ENCODE measurements at regions of chr15 and their contacts with region 1.

Region 1: DNA sequence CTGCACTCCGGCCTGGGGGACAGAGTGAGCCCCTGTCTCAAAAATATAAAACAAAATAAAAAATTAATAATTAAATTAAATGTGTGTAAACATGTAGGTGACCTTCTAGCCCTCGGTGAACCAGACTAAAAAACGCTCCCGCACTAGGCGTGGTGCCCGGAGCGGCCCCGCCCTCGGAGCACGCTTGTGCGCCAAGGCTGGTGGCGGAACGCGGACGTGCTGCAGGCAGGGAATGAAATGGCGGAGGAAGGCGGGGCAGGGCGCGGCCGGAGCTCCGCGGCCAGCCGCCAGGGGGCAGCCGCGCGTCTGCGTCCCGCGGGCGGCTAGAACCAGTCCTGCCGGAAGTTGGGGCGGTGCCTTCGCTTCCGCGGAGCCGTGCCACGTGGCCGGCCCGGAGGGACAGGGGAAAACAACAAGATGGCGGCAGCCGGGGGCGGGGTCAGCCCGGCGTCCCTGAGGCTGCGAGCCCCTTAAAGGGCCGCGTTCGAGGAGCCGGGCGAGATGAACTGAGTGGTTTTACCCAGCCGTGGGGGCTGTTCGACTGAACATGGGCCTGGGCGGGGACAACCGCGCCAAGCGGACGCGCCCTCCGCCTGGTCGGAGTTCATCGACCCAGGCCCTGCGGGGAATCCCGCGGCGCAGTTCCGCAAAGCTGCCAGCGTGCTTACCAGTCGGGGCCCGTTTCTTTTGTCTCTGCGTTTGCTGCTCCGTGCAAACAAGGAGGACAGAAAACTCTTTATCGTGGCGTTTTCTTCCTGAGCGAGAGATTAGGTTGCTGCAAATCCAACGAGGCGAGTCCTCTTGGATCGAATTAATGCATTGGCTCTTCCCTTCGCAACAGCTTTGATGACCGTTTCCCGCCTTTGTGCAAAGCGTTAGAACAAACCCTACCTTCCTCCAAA is 90.9 kb upstream of the CHD2 start:
- DNase-seq: peak; percentile 99

Region 2: DNA sequence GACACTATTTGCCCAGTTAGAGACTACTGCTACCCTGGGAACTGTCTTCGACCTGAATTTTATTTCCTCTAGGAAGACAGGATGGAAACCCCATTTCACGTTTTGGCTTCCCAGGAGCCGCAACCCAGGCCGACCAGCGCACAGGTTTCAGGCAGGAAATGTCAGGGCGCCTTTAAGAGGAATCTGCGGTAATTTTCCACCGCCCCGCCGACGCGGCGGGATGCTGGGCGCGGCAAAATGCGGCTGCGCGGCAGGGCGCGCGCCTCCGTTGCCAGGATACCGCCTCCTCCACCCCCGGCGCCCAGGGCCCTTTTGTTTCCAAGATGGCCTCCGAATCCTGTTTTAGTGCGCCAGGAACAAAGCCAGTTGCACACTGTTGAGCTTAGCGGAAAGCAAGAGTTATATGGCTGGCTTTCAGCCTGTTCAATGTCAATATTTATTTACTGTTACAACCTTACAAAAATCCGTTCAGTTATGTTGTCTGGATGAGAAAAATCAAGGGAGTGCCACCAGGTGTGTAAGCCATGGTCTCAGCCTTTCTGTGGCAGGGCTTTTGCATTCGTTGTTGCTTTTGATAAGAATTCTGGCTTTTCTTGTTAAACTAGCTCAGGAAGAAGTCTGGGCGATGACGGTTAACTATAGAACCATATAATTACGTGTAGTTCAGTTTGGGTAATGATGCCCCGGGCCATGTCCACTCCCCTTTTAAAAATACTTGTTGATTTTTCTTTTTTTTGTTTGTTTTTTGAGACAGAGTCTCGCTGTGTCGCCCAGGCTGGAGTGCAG is 11.2 kb after region 1 on chr15:
- intact Hi-C with region 1: loop called (anchors 1 kb)
- DNase-seq: peak; percentile 96

Region 3: GRCh38 chr15:92831655-92832328 is 22.6 kb after region 1 on chr15:
- intact Hi-C with region 1: loop called (anchors 1 kb)
- DNase-seq: peak; percentile 96

Region 4: DNA sequence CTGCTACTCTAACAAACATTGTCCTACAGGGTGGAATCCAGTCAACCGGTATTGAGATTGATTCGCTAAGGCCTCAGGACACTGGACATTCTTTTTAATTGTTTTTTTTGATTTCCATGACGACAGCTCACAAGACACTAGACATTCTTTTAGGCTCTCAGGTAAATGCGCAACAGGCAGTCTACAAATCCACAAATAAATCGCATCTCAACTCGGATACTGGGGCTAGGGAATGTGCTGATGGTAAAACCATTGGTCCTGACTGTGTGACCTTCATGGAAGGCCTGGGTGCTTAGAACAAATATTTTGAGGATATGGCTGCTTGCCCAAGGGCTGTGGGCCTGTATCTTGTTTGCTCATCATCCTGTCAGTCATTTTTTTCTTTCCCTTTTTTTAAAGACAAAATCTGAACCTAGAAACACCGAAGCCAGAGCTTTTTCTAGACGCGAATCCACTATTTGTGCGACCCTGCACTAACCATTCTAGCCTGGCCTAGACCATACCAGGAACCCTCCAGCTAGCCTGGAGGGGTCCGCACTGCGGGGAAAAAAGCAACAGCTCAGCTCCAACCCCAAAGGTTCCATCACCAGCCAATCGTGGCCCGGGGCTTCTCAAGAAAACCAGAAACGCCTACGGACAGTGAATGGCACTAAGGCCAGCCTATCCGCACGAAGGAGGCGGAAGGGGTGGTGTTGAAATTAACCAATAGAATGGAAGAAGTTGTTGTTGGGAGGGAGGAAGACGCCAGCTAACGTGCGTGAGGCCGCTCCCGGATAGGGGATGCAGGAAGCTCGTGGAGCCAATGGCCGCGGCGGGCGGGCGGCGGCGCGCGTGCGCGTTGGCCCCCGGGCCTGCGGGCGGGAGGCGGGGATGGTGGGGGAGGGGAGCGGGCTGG is 72.8 kb after region 1 on chr15:
- intact Hi-C with region 1: loop called (anchors 1 kb)
- DNase-seq: peak; percentile 99

Region 5: DNA sequence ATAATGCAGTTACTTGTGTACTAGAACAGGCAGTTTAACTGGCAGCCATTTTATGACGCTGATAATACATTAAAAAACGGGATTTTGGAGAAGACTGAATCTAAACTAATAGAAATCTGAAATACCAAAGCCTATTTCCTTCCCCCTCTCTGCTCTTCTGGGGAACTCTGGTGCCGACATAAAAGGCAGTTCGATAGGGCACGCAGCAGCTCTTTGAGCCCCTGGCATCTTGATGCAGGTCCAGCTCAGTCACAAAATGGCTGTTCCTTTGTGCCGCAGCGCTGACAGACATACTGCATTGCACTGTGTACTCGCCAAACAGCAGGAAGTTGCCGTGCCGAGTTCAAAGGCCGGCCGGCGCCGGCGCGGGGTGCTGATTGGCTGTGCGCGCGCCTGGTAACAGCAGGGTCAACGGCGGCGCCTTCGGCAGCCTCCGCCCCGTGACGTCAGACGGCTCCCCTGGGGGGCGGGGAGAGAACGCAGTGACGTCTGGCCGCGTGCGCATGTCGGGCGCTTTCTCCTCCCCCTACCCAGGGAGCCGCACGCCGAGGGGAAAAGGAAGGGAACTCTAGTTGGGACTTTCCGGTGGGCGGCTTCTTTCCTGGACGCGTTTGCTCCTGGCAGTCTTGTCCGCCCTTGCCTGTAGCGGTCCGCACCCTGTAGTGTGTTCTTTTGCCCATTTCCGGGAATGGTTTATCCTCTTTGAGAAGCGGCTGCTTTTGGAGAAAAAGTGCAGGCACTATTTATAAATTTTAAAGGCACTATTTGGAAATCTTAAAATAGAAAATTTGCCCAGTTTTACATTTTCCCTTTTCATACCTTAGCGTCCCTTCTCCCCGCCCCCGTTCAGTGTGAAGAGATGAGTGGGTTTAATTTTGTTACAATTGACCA is 95.0 kb after region 1 on chr15:
- intact Hi-C with region 1: loop called (anchors 1 kb)
- DNase-seq: peak; percentile 99

Region 6: DNA sequence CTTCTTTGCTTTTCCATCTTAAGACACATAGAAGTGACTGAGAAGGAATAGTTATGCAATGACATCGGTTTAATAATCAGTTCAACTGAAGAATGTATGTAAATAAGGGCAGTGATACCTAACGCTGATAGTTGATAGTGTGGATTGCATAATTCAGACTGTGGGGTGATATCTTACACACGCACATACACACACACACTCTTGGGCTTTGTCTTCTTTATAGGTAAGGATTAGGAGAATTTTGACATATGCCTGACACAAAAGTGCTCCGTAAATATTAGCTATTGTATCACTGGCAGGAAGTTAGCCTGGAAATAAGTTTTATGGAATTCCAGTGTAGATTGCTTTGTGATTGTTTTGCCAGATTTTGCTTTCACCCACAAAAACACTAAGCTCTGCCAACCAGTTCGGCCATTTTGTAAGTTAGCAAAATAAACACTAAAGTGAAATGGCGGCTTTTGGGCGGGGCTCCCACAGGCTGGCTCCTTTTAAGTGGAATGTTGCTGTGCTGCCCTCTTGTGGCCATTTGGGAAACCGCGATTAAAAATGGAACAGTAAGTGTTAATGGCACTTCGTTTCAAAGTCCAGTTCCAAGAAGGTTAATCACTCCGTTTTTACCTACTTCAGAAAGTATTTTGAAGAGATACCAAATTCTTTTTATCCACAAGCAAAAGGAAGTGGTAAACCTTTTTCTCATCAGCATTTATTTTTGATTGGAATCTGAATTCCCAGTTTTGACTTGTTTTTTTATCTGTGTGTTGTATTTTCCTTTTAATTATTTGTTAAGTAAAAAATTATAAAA is 108.6 kb after region 1 on chr15:
- intact Hi-C with region 1: loop called (anchors 1 kb)
- DNase-seq: peak; percentile 94

Region 7: GRCh38 chr15:94119923-94120775 is 1310.9 kb after region 1 on chr15:
- intact Hi-C with region 1: loop called (anchors 10 kb)
- DNase-seq: no peak